Activated CD8-positive, alpha-beta T cell treated with anti-CD3 and anti-CD28 coated beads for 36 hours (primary cell): ENCODE measurements at regions of chr6 and their contacts with region 1.

Region 1: DNA sequence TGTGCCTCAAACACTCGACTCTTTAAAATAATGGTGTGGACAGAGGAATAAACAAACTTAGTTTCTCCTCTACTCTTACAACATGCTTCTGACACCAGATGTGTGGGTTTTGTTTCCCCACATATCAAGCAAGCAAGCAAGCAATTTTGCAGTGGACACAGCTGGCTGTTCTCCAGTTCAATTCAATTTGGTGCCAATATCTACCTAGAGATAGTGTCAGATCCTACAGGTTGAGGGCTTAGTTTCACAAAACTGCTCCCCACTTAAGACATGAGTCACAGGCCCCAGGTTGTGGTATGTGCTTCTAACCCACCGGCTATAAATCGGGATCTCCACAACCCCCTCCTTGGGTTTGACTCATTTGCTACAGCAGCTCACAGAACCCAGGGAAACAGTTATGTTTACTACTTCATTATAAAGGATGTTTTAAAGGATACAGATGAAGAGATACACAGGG is 131.4 kb upstream of the TRAF3IP2 start:
- DNase-seq: peak; percentile 73
- ATAC-seq: peak; percentile 72
- H3K4me3 Mint-ChIP-seq: no peak overlapping the region
- H3K27ac Mint-ChIP-seq: peak overlapping the region; percentile 69
- H3K4me1 Mint-ChIP-seq: peaks cover 93% of the 10 kb centered on the region
- H3K27me3 Mint-ChIP-seq: no peaks in the 10 kb centered on the region
- CTCF ChIP-seq: no peak

Region 2: DNA sequence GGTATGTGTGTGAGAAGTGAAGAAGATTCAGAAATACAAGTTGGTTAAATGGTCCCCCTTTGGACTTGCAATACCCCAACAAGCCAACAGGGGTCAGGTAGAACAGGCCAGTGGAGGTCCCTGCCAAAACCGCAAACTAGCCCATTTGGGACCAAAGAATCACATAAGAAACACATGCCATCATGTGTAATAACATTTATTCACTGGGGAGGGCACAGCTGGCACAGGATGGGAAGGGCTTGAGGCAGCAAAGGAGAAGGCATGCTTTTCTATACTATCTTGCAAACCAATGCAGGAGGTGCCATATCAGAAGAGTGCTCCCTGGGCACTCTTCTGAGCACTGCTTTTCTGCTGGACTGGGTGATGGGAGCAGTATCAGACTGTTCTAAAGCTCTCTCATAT is 15.3 kb before region 1 on chr6:
- CTCF ChIA-PET with region 1: interaction called, 30 read pairs
- POLR2A ChIA-PET with region 1: interaction called, 5 read pairs
- intact Hi-C with region 1: no loop called
- DNase-seq: peak; percentile 67
- ATAC-seq: peak; percentile 40
- H3K4me3 Mint-ChIP-seq: no peak overlapping the region
- H3K27ac Mint-ChIP-seq: peak overlapping the region; percentile 79
- H3K4me1 Mint-ChIP-seq: peaks cover 95% of the 10 kb centered on the region
- H3K27me3 Mint-ChIP-seq: no peaks in the 10 kb centered on the region
- CTCF ChIP-seq: peak; percentile 66

Region 3: GRCh38 chr6:111748231-111748647 is 11.1 kb after region 1 on chr6:
- CTCF ChIA-PET with region 1: interaction called, 6 read pairs
- POLR2A ChIA-PET with region 1: interaction called, 11 read pairs
- intact Hi-C with region 1: no loop called
- DNase-seq: no peak
- ATAC-seq: no peak
- H3K4me3 Mint-ChIP-seq: no peak overlapping the region
- H3K27ac Mint-ChIP-seq: peak overlapping the region; percentile 63
- H3K4me1 Mint-ChIP-seq: peaks cover 90% of the 10 kb centered on the region
- H3K27me3 Mint-ChIP-seq: no peaks in the 10 kb centered on the region
- CTCF ChIP-seq: no peak